ENCODE measurements at regions of chr18 and their contacts with region 1.

Region 1: DNA sequence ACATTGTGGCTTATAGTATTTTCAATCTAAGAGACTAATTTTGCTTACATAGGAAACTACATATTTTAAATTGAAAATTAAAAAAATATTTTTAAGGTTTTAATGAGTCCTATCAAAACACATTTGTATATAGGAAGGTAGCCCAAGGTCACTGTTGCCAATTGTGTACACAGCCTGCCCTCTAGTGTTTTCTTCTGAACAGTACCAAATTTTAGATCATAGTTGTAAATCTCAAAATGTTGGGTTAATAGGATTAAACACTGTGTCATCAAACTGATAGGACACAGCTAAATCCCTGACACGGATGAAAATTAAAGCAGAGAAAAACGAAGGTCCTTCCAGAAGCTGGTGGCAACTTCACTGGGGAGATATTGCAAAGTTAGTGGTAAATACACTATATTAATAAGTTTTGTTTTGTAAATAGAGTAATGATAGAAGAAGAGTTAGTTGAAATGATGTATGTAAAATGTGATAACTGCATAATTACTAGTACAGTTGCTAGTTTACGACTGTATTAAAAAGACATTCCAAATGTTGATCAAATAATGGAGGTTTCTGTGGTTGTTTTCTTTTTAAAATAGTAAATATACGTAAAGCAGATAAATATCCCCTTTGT is 19.7 kb downstream of the CLUL1 start:
- DNase-seq: no peak
- ATAC-seq: peak in 3 of 4 donors; percentile 69 to 76 (median 69)
- H3K4me3 ChIP-seq: no peak overlapping the region
- H3K27ac ChIP-seq: peak overlapping the region in 1 of 12 donors; percentile 91
- H3K4me1 ChIP-seq: peaks cover 0 to 17% (median 0%) of the 10 kb centered on the region in 12 donors
- H3K27me3 ChIP-seq: peaks cover 0 to 2% (median 0%) of the 10 kb centered on the region in 9 donors
- CTCF ChIP-seq: peak; percentile 58 to 87 (median 78)
- POLR2A ChIP-seq: no peak

Region 2: DNA sequence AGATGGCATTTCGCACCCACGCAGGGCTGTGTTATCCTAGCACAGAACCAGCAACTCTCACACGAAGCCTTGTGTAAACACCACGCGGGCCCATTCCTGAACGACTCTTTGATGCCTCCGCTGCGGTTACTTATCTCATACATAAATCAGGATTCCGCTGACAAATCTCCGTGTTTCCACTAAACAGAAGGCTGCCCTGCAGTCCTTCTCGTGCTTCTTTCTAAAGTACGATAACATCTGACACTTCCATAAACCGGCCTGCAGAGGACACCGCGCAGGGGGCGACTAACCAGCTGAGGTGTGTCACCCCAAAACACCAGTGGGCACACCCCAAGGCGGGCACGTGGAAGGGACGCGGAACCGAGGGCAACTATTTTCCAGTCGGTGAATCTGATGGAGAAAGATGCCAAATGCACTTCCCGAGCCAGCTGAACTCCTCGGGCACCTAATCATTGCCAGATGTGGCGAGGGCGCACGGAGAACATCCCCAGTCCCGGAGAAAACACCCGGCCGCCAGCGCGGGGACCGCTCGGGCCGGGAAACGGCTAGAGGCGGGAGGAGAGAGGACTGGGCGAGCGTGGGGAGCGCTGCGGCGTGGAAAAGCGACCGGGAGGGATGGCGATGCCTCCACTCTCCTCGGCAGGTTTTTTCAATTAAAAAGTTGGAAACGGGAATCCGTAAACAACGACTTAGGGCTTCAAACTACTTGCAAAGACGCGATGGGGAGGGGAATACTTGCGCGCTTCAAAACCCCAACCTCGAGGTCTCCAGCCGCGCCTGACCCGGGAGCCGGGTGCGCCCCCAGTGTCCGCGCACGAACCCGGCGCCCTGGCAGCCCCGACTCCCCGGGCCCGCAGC is 116.7 kb before region 1 on chr18:
- intact Hi-C with region 1: loop called in 2 of 10 experiments (anchors 10 kb)
- DNase-seq: peak in 1 of 5 donors; percentile 36
- ATAC-seq: peak in 3 of 4 donors; percentile 16 to 40 (median 38)
- H3K4me3 ChIP-seq: peak overlapping the region; percentile 28 to 66 (median 55)
- H3K27ac ChIP-seq: peak overlapping the region in 7 of 12 donors; percentile 43 to 62 (median 54)
- H3K4me1 ChIP-seq: peaks cover 0 to 39% (median 9%) of the 10 kb centered on the region in 12 donors
- H3K27me3 ChIP-seq: peaks cover 3 to 46% (median 25%) of the 10 kb centered on the region in 9 donors
- CTCF ChIP-seq: peak in 3 of 12 donors; percentile 5 to 26 (median 24)
- POLR2A ChIP-seq: no peak

Region 3: GRCh38 chr18:1147730-1148129 is 531.2 kb after region 1 on chr18:
- intact Hi-C with region 1: no loop called
- DNase-seq: no peak
- ATAC-seq: no peak
- H3K4me3 ChIP-seq: no peak overlapping the region
- H3K27ac ChIP-seq: no peak overlapping the region
- H3K4me1 ChIP-seq: no peaks in the 10 kb centered on the region
- H3K27me3 ChIP-seq: no peaks in the 10 kb centered on the region
- CTCF ChIP-seq: no peak
- POLR2A ChIP-seq: no peak